Vagina (tissue), 2 donors: ENCODE measurements at regions of chr17 and their contacts with region 1.

Region 1: DNA sequence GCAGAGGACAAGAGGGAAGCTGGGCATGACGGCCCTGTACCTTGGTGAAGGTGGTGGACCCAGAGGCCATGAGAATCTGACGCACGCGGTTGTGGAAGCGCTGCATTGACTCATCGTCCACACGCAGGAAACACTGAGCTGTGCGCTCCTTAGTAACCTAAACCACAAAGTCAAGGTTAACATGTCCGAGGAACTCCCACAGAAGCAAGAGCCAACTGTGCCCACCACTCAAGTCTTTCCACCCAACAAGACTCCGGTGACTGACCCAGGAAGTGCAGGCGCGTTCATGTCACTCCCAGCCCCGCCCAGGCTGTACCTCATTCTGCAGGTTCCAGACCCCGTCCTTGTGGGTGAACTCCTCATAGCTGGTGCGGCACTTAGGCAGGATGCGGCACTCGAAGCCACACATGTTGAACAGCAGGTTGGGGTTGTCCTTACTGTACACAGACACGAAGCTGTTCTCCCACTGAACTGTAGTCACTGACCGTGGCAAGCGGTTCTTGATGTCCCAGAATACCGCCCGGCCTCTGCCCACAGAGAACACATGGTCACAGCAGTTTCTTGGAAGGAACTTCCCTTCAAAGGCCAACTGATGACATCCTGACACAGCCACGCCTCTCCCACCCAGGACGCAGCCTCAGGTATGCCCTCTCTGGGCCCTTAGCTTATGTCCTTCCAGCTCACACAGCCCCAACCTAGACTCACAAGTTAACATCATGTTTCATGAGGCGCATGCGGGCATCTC is 11.5 kb downstream of the PRPF8 start:
- DNase-seq: no peak
- H3K4me3 ChIP-seq: no peak overlapping the region
- H3K27ac ChIP-seq: no peak overlapping the region
- H3K4me1 ChIP-seq: peaks cover 11% of the 10 kb centered on the region
- H3K27me3 ChIP-seq: no peaks in the 10 kb centered on the region
- CTCF ChIP-seq: no peak
- POLR2A ChIP-seq: no peak

Region 2: GRCh38 chr17:1108861-1109605 is 564.2 kb before region 1 on chr17:
- intact Hi-C with region 1: no loop called
- DNase-seq: peak in 1 of 2 donors; percentile 87
- H3K4me3 ChIP-seq: peak overlapping the region; percentile 65 to 69
- H3K27ac ChIP-seq: peak overlapping the region; percentile 90
- H3K4me1 ChIP-seq: peaks cover 62% of the 10 kb centered on the region
- H3K27me3 ChIP-seq: no peaks in the 10 kb centered on the region
- CTCF ChIP-seq: no peak
- POLR2A ChIP-seq: peak in 1 of 2 donors; percentile 19

Region 3: DNA sequence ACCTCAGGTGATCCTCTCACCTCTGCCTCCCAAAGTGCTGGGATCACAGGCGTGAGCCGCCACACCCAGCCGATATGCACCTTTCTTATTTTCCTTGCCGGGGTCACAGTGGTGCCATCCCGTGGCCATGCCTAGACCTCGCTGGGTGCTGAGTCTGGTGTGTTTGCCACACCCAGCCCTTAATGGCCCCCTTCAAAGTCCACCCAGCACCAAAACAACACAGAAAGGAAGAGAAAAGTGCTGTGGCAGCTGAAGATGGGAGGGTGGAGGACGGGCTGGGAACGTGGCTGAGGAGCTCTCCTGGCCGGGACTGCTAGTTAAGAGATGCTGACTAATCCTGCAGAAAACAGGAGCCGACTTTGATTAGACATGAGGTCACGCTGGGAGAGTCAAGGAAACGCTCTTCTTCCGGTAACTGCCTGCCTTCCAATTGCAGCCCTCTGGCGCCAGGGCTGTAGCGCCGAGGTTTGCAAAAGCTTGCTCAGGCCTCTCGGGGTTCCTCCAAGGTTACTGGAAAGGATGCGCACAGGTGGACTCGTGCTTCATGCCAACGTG is 55.5 kb before region 1 on chr17:
- intact Hi-C with region 1: no loop called
- DNase-seq: no peak
- H3K4me3 ChIP-seq: no peak overlapping the region
- H3K27ac ChIP-seq: no peak overlapping the region
- H3K4me1 ChIP-seq: no peaks in the 10 kb centered on the region
- H3K27me3 ChIP-seq: no peaks in the 10 kb centered on the region
- CTCF ChIP-seq: no peak
- POLR2A ChIP-seq: no peak

Region 4: GRCh38 chr17:1736348-1737281 is 63.4 kb after region 1 on chr17:
- intact Hi-C with region 1: no loop called
- DNase-seq: no peak
- H3K4me3 ChIP-seq: no peak overlapping the region
- H3K27ac ChIP-seq: peak overlapping the region; percentile 80
- H3K4me1 ChIP-seq: peaks cover 26% of the 10 kb centered on the region
- H3K27me3 ChIP-seq: no peaks in the 10 kb centered on the region
- CTCF ChIP-seq: no peak
- POLR2A ChIP-seq: no peak

Region 5: GRCh38 chr17:1783834-1784611 is 110.8 kb after region 1 on chr17:
- intact Hi-C with region 1: loop called (anchors 5 kb)
- DNase-seq: peak in 1 of 2 donors; percentile 99
- H3K4me3 ChIP-seq: no peak overlapping the region
- H3K27ac ChIP-seq: peak overlapping the region; percentile 97
- H3K4me1 ChIP-seq: peaks cover 76% of the 10 kb centered on the region
- H3K27me3 ChIP-seq: no peaks in the 10 kb centered on the region
- CTCF ChIP-seq: peak; percentile 58 to 93 (median 78)
- POLR2A ChIP-seq: peak in 1 of 2 donors; percentile 63

Region 6: DNA sequence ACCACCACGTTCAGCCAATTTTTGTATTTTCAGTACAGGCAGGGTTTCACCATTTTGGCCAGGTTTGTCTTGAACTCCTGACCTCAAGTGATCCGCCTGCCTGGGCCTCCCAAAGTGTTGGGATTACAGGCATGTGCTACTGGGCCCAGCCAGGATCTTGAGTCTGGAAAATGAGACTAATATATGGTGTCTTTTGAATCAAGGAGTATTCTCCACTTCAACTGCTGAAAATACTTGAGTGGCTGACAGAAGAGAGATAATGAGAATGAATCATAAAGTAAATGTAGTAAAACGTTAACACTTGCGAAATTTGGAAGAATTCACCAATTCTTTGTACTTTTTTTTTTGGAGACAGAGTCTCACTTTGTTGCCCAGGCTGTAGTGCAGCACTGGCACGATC is 139.9 kb after region 1 on chr17:
- intact Hi-C with region 1: no loop called
- DNase-seq: no peak
- H3K4me3 ChIP-seq: no peak overlapping the region
- H3K27ac ChIP-seq: no peak overlapping the region
- H3K4me1 ChIP-seq: no peaks in the 10 kb centered on the region
- H3K27me3 ChIP-seq: no peaks in the 10 kb centered on the region
- CTCF ChIP-seq: no peak
- POLR2A ChIP-seq: no peak

Region 7: GRCh38 chr17:1865252-1866037 is 192.2 kb after region 1 on chr17:
- intact Hi-C with region 1: loop called (anchors 10 kb)
- DNase-seq: no peak
- H3K4me3 ChIP-seq: no peak overlapping the region
- H3K27ac ChIP-seq: no peak overlapping the region
- H3K4me1 ChIP-seq: no peaks in the 10 kb centered on the region
- H3K27me3 ChIP-seq: no peaks in the 10 kb centered on the region
- CTCF ChIP-seq: peak in 2 of 3 experiments; percentile 21 to 27
- POLR2A ChIP-seq: no peak